Natural killer cell (primary cell): ENCODE measurements at regions of chr9 and their contacts with region 1.

Region 1: DNA sequence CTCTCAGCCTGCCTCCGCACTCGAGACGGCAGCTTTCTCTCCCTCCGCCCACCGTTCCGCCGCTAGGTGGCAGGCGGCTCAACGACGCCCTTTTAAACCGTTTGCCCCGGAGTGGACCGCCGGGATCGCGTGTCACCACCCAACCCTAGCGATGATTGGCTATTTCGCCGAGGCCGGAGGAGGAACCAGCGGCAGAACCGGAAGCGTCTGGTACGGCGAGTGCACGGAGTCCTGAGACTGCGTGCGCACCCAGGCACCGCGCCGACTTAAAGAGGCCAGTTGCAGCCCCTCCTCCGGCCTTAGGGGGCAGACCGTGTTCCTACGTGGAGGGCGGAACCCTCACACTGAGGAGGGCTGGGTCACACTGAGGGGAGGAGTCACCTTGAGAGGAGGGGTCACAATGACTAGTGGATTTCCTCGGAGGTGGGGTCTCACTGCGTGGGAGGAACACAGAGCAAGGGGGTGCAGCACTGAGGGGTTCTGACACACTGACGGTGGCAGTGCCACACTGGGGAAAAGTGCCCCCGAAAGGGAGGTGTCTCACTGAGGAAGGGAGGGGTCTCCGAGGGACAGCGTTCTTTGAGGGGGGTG is 980 bp upstream of the TESK1 start:
- DNase-seq: peak; percentile 98 to 100
- ATAC-seq: peak; percentile 88 to 97 (median 90)
- H3K4me3 ChIP-seq: peak overlapping the region; percentile 51
- H3K4me3 Mint-ChIP-seq: peak overlapping the region; percentile 98
- H3K27ac ChIP-seq: peak overlapping the region; percentile 80
- H3K27ac Mint-ChIP-seq: peak overlapping the region; percentile 96 to 98
- H3K4me1 ChIP-seq: peaks cover 37% of the 10 kb centered on the region
- H3K4me1 Mint-ChIP-seq: peaks cover 22 to 37% of the 10 kb centered on the region in 2 donors
- H3K27me3 ChIP-seq: no peaks in the 10 kb centered on the region
- H3K27me3 Mint-ChIP-seq: no peaks in the 10 kb centered on the region
- CTCF ChIP-seq: peak; percentile 98

Region 2: DNA sequence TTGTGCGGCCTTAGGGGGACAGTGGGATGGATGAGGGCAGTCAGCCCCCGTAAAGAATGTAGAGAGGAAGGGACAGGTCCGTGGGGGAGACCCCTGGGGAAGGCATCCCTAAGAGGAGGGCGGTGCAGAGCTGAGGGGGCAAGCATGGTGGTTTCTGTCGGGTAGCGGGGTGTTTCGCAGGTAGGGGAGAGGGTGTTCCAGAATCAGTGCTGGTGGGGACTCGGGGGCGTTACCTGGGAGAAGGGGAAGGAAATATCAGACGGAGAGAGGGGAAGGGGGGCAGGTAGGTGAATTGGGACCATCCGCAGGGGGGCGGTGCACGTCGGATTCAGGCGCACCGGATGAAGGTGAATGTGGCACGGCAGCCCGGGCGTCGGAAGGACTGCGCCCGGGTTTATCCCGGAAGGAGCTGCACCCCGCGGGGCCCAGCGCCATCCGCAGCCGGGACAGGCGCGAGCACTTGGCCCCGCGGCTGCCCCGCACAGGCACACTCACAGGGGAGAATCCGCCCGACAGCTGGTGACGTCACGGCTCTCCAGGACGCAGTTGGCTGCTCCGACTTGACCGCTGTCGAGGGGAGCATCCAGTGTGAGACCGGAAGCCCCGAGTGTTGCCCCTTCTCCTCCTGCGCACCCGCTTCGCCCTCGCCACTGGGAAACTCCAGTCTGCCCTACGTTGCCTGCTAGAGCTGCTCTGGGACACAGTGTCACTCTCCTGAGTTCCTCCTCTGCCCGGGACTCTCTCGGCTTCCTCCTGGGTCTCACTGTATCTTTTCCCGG is 12.8 kb after region 1 on chr9:
- intact Hi-C with region 1: loop called (anchors 1 kb)
- DNase-seq: peak; percentile 85 to 86
- ATAC-seq: peak; percentile 73 to 82 (median 80)
- H3K4me3 ChIP-seq: peak overlapping the region; percentile 55
- H3K4me3 Mint-ChIP-seq: peak overlapping the region; percentile 96
- H3K27ac ChIP-seq: peak overlapping the region; percentile 97
- H3K27ac Mint-ChIP-seq: peak overlapping the region; percentile 98 to 99
- H3K4me1 ChIP-seq: peaks cover 52% of the 10 kb centered on the region
- H3K4me1 Mint-ChIP-seq: peaks cover 59 to 65% of the 10 kb centered on the region in 2 donors
- H3K27me3 ChIP-seq: no peaks in the 10 kb centered on the region
- H3K27me3 Mint-ChIP-seq: no peaks in the 10 kb centered on the region
- CTCF ChIP-seq: no peak

Region 3: GRCh38 chr9:35657546-35658136 is 53.6 kb after region 1 on chr9 and contains the start of gene RMRP:
- intact Hi-C with region 1: loop called (anchors 1 kb)
- DNase-seq: peak; percentile 74 to 96
- ATAC-seq: peak; percentile 80 to 90 (median 83)
- H3K4me3 ChIP-seq: peak within 1 kb of the TSS; percentile 82
- H3K4me3 Mint-ChIP-seq: peak within 1 kb of the TSS; percentile 97
- H3K27ac ChIP-seq: peak within 1 kb of the TSS; percentile 99
- H3K27ac Mint-ChIP-seq: peak within 1 kb of the TSS; percentile 95 to 100
- H3K4me1 ChIP-seq: peaks cover 64% of the 10 kb centered on the region
- H3K4me1 Mint-ChIP-seq: peaks cover 55 to 67% of the 10 kb centered on the region in 2 donors
- H3K27me3 ChIP-seq: no peaks in the 10 kb centered on the region
- H3K27me3 Mint-ChIP-seq: peaks cover 3 to 8% of the 10 kb centered on the region in 2 donors
- CTCF ChIP-seq: no peak
- total RNA-seq, gene RMRP: 5,042 to 6,602 (median 5,874) TPM

Region 4: GRCh38 chr9:35748858-35749514 is 144.9 kb after region 1 on chr9 and contains the starts of genes GBA2 and RGP1:
- intact Hi-C with region 1: loop called (anchors 5 kb)
- DNase-seq: peak; percentile 67 to 70
- ATAC-seq: peak; percentile 82 to 88 (median 85)
- H3K4me3 ChIP-seq: peak within 1 kb of the TSS; percentile 87
- H3K4me3 Mint-ChIP-seq: peak within 1 kb of the TSS; percentile 92
- H3K27ac ChIP-seq: peak within 1 kb of the TSS; percentile 79
- H3K27ac Mint-ChIP-seq: peak within 1 kb of the TSS; percentile 90 to 92
- H3K4me1 ChIP-seq: peaks cover 34% of the 10 kb centered on the region
- H3K4me1 Mint-ChIP-seq: peaks cover 40 to 50% of the 10 kb centered on the region in 2 donors
- H3K27me3 ChIP-seq: no peaks in the 10 kb centered on the region
- H3K27me3 Mint-ChIP-seq: no peaks in the 10 kb centered on the region
- CTCF ChIP-seq: no peak
- total RNA-seq, gene GBA2: 76.4 to 118 (median 101) TPM
- total RNA-seq, gene RGP1: 22.3 to 26.4 (median 23.3) TPM

Region 5: GRCh38 chr9:35882263-35882848 is 278.3 kb after region 1 on chr9:
- intact Hi-C with region 1: loop called (anchors 5 kb)
- DNase-seq: peak; percentile 78 to 89
- ATAC-seq: peak; percentile 64 to 75 (median 67)
- H3K4me3 ChIP-seq: no peak overlapping the region
- H3K4me3 Mint-ChIP-seq: no peak overlapping the region
- H3K27ac ChIP-seq: no peak overlapping the region
- H3K27ac Mint-ChIP-seq: no peak overlapping the region
- H3K4me1 ChIP-seq: no peaks in the 10 kb centered on the region
- H3K4me1 Mint-ChIP-seq: no peaks in the 10 kb centered on the region
- H3K27me3 ChIP-seq: peaks cover 2% of the 10 kb centered on the region
- H3K27me3 Mint-ChIP-seq: peaks cover 18 to 21% of the 10 kb centered on the region in 2 donors
- CTCF ChIP-seq: peak; percentile 99